ENCODE measurements at regions of chr12 and their contacts with region 1.

Region 1: GRCh38 chr12:109467978-109468682 is 9.0 kb downstream of the KCTD10 start:
- DNase-seq: peak in 2 of 7 donors; percentile 31 to 37
- H3K4me3 ChIP-seq: no peak overlapping the region
- H3K27ac ChIP-seq: peak overlapping the region in 3 of 5 donors; percentile 15 to 95 (median 80)
- H3K4me1 ChIP-seq: peaks cover 25 to 72% of the 10 kb centered on the region in 2 donors
- H3K27me3 ChIP-seq: no peaks in the 10 kb centered on the region
- CTCF ChIP-seq: no peak
- POLR2A ChIP-seq: no peak

Region 2: DNA sequence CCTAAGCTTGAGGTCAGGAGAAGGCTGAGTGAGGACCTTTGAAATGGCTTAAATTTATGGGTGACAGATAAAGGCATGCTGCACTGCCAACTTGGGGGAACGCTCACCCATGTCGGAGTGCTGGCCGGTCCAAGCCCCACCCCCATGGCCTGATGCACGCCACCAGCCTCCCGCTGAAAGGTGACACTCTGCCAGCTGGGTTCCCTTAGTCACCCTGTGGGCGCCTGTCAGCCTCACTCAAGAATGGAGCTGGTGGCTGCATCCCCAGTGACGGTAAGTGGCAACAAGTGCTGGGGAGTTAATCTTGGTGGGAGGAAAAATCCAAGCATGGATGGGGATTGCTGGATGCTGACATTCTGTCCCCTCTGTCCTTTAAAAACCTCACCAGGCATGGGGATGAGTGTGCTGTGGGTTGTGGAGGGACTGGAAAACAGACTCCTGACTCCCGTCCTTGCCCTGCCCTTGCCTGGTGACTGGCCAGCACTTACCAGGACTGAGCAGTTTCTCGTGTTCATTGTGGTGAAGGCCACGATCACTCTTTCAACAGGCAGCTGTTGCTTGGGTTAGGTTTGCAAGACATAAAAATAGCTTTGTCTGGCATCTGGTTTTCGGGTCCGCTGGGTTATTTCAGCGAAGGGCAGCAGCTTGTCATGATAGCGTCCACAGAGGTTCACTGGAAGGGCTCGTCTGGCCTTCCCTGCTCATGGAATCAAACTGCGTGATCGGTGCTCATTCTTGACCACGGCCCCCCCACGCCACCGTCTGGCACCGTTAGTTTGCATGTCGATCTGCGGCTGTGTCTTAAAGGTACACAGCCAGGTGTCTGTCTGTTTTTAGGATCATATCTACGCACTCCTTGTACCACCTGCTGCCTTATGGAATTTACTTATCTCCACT is 336.7 kb before region 1 on chr12:
- intact Hi-C with region 1: no loop called
- DNase-seq: peak; percentile 87 to 95 (median 94)
- H3K4me3 ChIP-seq: peak overlapping the region in 1 of 4 donors; percentile 35
- H3K27ac ChIP-seq: peak overlapping the region; percentile 75 to 92 (median 89)
- H3K4me1 ChIP-seq: peaks cover 28 to 40% of the 10 kb centered on the region in 2 donors
- H3K27me3 ChIP-seq: no peaks in the 10 kb centered on the region
- CTCF ChIP-seq: no peak
- POLR2A ChIP-seq: peak in 1 of 2 donors; percentile 74

Region 3: GRCh38 chr12:109428037-109428629 is 40.0 kb before region 1 on chr12:
- intact Hi-C with region 1: loop called in 1 of 2 experiments (anchors 5 kb)
- DNase-seq: peak; percentile 76 to 93 (median 82)
- H3K4me3 ChIP-seq: no peak overlapping the region
- H3K27ac ChIP-seq: no peak overlapping the region
- H3K4me1 ChIP-seq: no peaks in the 10 kb centered on the region
- H3K27me3 ChIP-seq: no peaks in the 10 kb centered on the region
- CTCF ChIP-seq: peak; percentile 74 to 99 (median 90)
- POLR2A ChIP-seq: no peak

Measured in adrenal gland (tissue), 19 donors.